ENCODE measurements at regions of chr10 and their contacts with region 1.

Region 1: DNA sequence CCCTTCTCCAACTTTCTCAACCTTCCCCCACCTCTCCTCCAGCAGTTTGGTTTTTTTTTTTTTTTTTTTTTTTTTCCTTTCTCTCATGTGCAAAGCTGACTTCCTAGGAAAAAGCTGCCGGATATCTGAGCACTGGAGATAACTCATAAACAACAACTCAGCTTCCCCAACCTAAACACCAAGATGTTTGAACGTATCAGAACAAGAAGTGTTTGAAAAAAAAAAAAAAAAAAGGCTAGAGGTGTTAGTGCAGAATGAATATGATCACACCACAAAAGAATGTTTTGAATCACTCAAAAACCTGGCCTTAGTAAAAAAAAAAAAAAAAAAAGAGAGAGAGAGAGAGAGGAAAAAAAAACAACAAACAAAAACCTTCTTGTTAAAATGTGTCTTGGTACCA is 11.2 kb downstream of the GATA3 start:
- DNase-seq: no peak
- H3K4me3 Mint-ChIP-seq: no peak overlapping the region
- H3K27ac Mint-ChIP-seq: peak overlapping the region; percentile 78
- H3K4me1 Mint-ChIP-seq: peaks cover 88% of the 10 kb centered on the region
- H3K27me3 Mint-ChIP-seq: no peaks in the 10 kb centered on the region

Region 2: GRCh38 chr10:8489823-8490222 is 424.2 kb after region 1 on chr10:
- CTCF ChIA-PET with region 1: no interaction called
- intact Hi-C with region 1: no loop called
- DNase-seq: no peak
- H3K4me3 Mint-ChIP-seq: no peak overlapping the region
- H3K27ac Mint-ChIP-seq: no peak overlapping the region
- H3K4me1 Mint-ChIP-seq: no peaks in the 10 kb centered on the region
- H3K27me3 Mint-ChIP-seq: no peaks in the 10 kb centered on the region

Region 3: GRCh38 chr10:8577686-8578085 is 512.0 kb after region 1 on chr10:
- CTCF ChIA-PET with region 1: no interaction called
- intact Hi-C with region 1: loop called (anchors 5 kb)
- DNase-seq: peak; percentile 33
- H3K4me3 Mint-ChIP-seq: no peak overlapping the region
- H3K27ac Mint-ChIP-seq: no peak overlapping the region
- H3K4me1 Mint-ChIP-seq: peaks cover 28% of the 10 kb centered on the region
- H3K27me3 Mint-ChIP-seq: peaks cover 19% of the 10 kb centered on the region